ENCODE measurements at regions of chr17 and their contacts with region 1.

Region 1: GRCh38 chr17:31524926-31525800 is 133.7 kb downstream of the RAB11FIP4 start:
- ATAC-seq: peak; percentile 74 to 99 (median 83)
- H3K4me3 ChIP-seq: no peak overlapping the region
- H3K27ac ChIP-seq: no peak overlapping the region
- H3K4me1 ChIP-seq: no peaks in the 10 kb centered on the region

Region 2: GRCh38 chr17:31144428-31144827 is 380.7 kb before region 1 on chr17:
- in situ Hi-C with region 1: no loop called
- ATAC-seq: peak in 3 of 8 experiments; percentile 25 to 46 (median 32)
- H3K4me3 ChIP-seq: no peak overlapping the region
- H3K27ac ChIP-seq: no peak overlapping the region
- H3K4me1 ChIP-seq: no peaks in the 10 kb centered on the region

Region 3: GRCh38 chr17:31388770-31389661 is 136.1 kb before region 1 on chr17:
- in situ Hi-C with region 1: loop called in 2 of 9 experiments (anchors 25 kb)
- ATAC-seq: peak in 6 of 8 experiments; percentile 4 to 43 (median 25)
- H3K4me3 ChIP-seq: no peak overlapping the region
- H3K27ac ChIP-seq: no peak overlapping the region
- H3K4me1 ChIP-seq: peaks cover 22 to 30% of the 10 kb centered on the region in 2 donors

Region 4: DNA sequence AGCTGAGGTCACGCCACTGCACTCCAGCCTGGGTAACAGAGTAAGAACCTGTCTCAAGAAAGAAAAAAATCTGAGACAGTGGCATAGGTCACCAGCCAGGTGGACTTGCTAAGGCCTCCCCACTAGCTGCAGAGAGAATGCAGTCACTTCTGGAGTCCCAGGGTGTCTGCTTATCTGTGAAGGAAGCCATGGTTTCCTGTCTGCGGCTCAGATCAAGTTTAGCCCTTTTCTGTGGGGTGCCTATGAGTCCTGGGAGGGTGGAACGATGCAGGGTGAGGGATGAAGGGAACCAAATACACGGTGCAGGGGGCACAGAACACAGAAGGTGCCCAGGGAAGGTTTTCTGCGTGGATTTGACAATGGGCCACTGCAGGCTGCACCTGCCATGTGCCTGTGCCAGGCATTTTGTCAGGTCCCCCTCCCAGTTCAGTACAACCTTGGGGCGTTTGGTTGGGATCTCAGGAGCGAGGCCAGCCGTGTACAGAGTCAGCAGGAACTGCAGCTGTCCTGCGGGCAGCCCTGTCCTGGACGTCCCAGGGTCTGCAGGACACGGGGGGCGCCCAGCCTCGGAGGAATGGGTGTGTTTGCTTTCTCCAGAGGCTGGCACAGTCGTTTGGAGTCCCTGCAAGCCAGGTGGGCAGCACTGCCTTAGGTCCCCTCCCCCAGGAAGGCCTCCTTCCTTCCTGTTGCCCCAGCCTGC is 91.9 kb before region 1 on chr17:
- in situ Hi-C with region 1: loop called in 2 of 9 experiments (anchors 10 to 25 kb)
- ATAC-seq: no peak
- H3K4me3 ChIP-seq: no peak overlapping the region
- H3K27ac ChIP-seq: no peak overlapping the region
- H3K4me1 ChIP-seq: peaks cover 13 to 20% of the 10 kb centered on the region in 2 donors

Region 5: GRCh38 chr17:31609996-31610910 is 85.1 kb after region 1 on chr17:
- in situ Hi-C with region 1: no loop called
- ATAC-seq: peak in 3 of 8 experiments; percentile 91 to 93 (median 92)
- H3K4me3 ChIP-seq: no peak overlapping the region
- H3K27ac ChIP-seq: peak overlapping the region in 1 of 2 donors; percentile 48
- H3K4me1 ChIP-seq: peaks cover 11 to 20% of the 10 kb centered on the region in 2 donors